PC-9 (cell line): ENCODE measurements at regions of chr2 and their contacts with region 1.

Region 1: GRCh38 chr2:112764071-112765044 is at the start of gene CKAP2L:
- DNase-seq: peak; percentile 94
- H3K4me3 ChIP-seq: peak within 1 kb of the TSS; percentile 77
- H3K27ac ChIP-seq: 0 out of 2 replicates have a peak within 1 kb of the TSS, but pooled peaks have one; percentile 25
- H3K4me1 ChIP-seq: peaks cover 29% of the 10 kb centered on the region
- H3K27me3 ChIP-seq: no peaks in the 10 kb centered on the region
- CTCF ChIP-seq: no peak
- total RNA-seq, gene CKAP2L: 17.7 and 28.7 TPM in 2 replicates

Region 2: DNA sequence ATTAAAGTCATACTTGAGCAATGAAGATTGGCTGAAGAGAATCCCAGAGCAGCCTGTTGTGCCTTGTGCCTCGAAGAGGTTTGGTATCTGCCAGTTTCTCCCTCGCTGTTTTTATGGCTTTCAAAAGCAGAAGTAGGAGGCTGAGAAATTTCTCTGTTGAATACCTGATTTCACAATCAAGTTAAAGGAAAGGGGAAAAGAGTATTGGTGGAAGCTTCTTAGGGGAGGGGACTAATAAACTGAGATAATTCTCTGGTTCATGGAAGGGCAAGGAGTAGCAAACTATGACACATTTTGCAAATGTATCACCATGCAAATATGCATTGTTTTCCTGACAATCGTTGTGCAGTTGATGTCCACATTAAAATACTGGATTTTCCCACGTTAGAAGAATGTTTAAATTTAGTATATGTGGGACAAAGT is 72.3 kb after region 1 on chr2 and contains the start of gene IL1B:
- CTCF ChIA-PET with region 1: no interaction called
- POLR2A ChIA-PET with region 1: no interaction called
- intact Hi-C with region 1: loop called (anchors 2 kb)
- DNase-seq: peak; percentile 30 to 93
- H3K4me3 ChIP-seq: peak within 1 kb of the TSS; percentile 41
- H3K27ac ChIP-seq: peak within 1 kb of the TSS; percentile 93
- H3K4me1 ChIP-seq: peaks cover 47% of the 10 kb centered on the region
- H3K27me3 ChIP-seq: no peaks in the 10 kb centered on the region
- CTCF ChIP-seq: no peak
- total RNA-seq, gene IL1B: 1.4 TPM in 2 replicates

Region 3: DNA sequence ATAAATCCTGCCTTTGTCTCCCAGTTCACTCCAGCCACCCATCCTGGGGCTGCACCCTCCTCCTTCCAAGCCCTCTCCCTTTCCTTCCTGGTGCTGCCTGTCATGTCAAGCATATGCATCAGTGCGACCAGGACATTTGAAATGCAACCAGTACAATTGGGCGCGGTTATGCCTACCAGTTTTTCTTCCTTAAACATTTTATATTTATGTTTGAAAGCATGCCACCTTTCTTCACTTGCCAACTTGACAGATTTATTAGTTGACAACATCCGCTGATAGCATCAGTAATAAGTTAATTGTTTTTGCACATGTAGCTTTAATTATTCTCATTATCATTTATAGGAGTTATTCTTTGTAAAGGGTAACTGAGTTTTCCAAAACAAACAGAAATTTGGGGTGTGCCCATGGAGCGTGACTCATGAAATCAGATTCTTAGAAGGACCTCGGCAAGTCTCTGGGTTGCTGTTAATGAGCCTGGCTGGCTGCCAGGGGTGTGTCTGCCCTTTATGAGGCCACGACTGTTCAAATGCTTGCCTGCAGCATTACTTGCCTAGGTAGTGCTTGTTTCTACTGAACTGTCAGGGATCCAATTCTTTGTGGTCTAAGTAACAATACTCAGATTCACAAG is 105.0 kb after region 1 on chr2:
- CTCF ChIA-PET with region 1: no interaction called
- POLR2A ChIA-PET with region 1: interaction called, 4 read pairs
- intact Hi-C with region 1: loop called (anchors 5 kb)
- DNase-seq: peak; percentile 91 to 97
- H3K4me3 ChIP-seq: 0 out of 2 replicates have a peak overlapping the region, but pooled peaks have one; percentile 4
- H3K27ac ChIP-seq: peak overlapping the region; percentile 56
- H3K4me1 ChIP-seq: peaks cover 34% of the 10 kb centered on the region
- H3K27me3 ChIP-seq: no peaks in the 10 kb centered on the region
- CTCF ChIP-seq: no peak

Region 4: GRCh38 chr2:112891385-112891831 is 127.0 kb after region 1 on chr2:
- CTCF ChIA-PET with region 1: no interaction called
- POLR2A ChIA-PET with region 1: no interaction called
- intact Hi-C with region 1: loop called (anchors 2 kb)
- DNase-seq: peak; percentile 88 to 95
- H3K4me3 ChIP-seq: no peak overlapping the region
- H3K27ac ChIP-seq: peak overlapping the region; percentile 95
- H3K4me1 ChIP-seq: peaks cover 17% of the 10 kb centered on the region
- H3K27me3 ChIP-seq: no peaks in the 10 kb centered on the region
- CTCF ChIP-seq: 0 out of 2 replicates have a peak, but pooled peaks have one; percentile 11